Activated B cell treated with CpG ODN at 0.5 μM for 24 hours (primary cell): ENCODE measurements at regions of chrX and their contacts with region 1.

Region 1: GRCh38 chrX:5526191-5526590 is 702.5 kb downstream of the NLGN4X start:
- DNase-seq: no peak
- ATAC-seq: no peak
- H3K4me3 Mint-ChIP-seq: no peak overlapping the region
- H3K27ac Mint-ChIP-seq: no peak overlapping the region
- H3K4me1 Mint-ChIP-seq: no peaks in the 10 kb centered on the region
- H3K27me3 Mint-ChIP-seq: no peaks in the 10 kb centered on the region
- CTCF ChIP-seq: no peak

Region 2: GRCh38 chrX:5549512-5549911 is 23.3 kb after region 1 on chrX:
- CTCF ChIA-PET with region 1: no interaction called
- POLR2A ChIA-PET with region 1: no interaction called
- intact Hi-C with region 1: loop called (anchors 1 kb)
- DNase-seq: no peak
- ATAC-seq: no peak
- H3K4me3 Mint-ChIP-seq: no peak overlapping the region
- H3K27ac Mint-ChIP-seq: no peak overlapping the region
- H3K4me1 Mint-ChIP-seq: no peaks in the 10 kb centered on the region
- H3K27me3 Mint-ChIP-seq: no peaks in the 10 kb centered on the region
- CTCF ChIP-seq: no peak